Calu3 (cell line): ENCODE measurements at regions of chr3 and their contacts with region 1.

Region 1: DNA sequence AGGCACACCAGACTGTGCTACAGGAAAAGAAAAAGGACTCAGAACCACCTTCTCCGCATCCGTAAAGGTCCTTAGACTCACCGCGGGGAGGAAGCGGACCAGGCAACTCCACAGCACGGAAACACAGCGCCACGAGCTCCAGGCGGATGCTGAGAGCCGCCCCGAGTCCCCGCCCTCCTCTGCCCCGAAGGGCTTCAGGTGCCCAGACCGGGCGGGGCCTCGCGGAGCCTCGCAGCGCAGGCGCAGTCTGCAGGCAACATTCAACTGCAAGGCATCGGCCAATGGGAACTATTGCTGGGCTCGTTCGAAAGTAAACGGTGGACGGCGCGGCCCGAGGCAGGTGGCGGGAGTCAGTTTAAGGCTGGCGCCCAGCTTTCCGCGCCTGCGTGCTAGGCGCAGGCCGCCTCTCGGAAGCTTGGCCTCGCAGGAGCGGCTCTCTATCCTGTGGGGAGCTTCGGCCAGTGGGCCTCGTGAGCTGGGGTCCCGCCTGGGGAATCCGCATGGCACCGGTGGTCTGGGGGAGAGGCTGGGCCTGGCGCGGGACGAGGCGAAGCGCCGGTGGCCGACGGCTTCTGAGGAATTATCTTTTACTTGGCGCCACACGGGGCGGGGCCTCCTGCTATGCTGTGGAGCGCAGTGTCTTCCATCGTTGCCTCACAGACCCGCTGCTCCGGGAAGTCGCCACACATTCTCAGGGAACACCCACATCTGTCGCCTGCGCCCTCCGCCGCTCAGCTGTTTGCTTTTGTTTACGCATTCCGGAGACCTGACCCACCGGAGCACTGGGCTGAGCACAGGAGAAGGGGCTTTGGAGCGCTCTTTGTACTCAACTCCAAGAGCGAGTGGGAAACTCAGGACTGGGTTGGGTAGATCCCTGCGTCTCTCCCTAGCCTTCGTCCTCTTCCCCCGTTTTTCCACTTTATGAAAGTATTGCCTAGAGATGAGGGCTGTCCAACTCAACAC is at the start of gene TRIM59:
- DNase-seq: peak; percentile 97
- H3K4me3 Mint-ChIP-seq: peak within 1 kb of the TSS; percentile 100
- H3K27ac Mint-ChIP-seq: peak within 1 kb of the TSS; percentile 100
- H3K4me1 Mint-ChIP-seq: peaks cover 38% of the 10 kb centered on the region
- H3K27me3 Mint-ChIP-seq: no peaks in the 10 kb centered on the region
- CTCF ChIP-seq: no peak
- total RNA-seq, gene TRIM59: 20.8 and 22.3 TPM in 2 replicates

Region 2: DNA sequence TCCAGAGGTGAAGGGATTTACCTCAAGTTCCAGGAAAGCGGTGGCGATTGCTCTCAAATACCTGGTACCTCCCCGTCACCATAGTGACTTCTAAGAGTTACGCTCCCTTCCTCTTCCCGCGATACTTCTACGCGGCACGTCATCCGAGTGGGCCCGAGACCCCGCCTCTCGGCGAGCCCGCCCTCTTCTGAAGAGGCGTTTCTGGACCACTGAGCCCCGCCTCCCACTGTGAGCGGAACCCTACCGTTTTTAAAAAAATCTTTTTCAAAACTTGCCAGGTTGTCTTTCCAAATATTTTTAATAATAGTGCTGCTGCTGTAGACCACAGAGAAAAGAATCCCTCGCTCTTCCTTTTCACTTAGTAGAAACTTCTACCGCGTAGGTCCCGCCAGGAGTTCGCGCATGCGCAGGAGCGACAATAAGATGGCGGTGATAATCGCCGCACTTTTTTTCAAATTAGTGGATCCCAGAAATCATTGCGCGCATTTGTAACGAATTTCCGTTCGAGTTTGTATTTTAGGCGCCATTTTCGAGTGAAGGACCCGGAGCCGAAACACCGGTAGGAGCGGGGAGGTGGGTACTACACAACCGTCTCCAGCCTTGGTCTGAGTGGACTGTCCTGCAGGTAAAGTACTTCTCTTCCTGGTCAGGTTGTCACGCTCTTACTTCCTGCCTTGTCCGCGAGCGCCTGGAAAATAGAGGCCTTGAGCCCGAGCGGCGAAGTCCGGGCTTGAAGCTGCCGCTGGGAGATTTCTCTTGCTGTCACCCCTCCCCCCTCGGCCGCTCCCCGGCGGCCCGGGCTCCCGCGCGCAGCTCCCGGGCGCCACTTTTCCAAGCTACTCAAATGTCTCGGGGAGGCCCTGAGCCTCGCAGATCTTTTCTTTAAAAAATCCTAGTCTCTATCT is 50.5 kb before region 1 on chr3 and contains the starts of genes IFT80 and SMC4:
- CTCF ChIA-PET with region 1: interaction called, 3 read pairs
- intact Hi-C with region 1: loop called (anchors 5 kb)
- DNase-seq: peak; percentile 99
- H3K4me3 Mint-ChIP-seq: peak within 1 kb of the TSS; percentile 98
- H3K27ac Mint-ChIP-seq: peak within 1 kb of the TSS; percentile 98
- H3K4me1 Mint-ChIP-seq: peaks cover 41% of the 10 kb centered on the region
- H3K27me3 Mint-ChIP-seq: no peaks in the 10 kb centered on the region
- CTCF ChIP-seq: no peak
- total RNA-seq, gene IFT80: 58.0 and 61.8 TPM in 2 replicates
- total RNA-seq, gene SMC4: 231 and 256 TPM in 2 replicates

Region 3: DNA sequence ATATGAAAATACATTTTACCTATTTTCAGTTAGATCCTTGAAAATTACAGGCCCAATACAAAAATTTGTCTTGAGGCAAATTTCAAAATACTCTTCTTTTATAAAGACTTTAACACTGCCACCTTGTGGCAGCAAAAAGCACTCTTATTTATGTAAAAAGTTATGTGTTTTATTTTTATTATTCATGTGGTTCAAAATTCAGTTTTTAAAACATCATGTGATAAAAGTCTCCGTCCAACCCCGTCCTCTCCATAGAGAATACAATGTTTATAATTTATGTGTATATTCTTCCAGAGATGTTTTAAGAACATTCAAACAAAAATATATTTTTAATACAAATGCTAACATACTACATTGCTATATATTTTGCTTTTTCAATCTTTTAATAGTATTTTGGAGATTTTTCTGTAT is 36.5 kb after region 1 on chr3:
- CTCF ChIA-PET with region 1: interaction called, 15 read pairs
- intact Hi-C with region 1: loop called (anchors 2 kb)
- DNase-seq: peak; percentile 19
- H3K4me3 Mint-ChIP-seq: peak overlapping the region; percentile 70
- H3K27ac Mint-ChIP-seq: no peak overlapping the region
- H3K4me1 Mint-ChIP-seq: peaks cover 12% of the 10 kb centered on the region
- H3K27me3 Mint-ChIP-seq: no peaks in the 10 kb centered on the region
- CTCF ChIP-seq: peak; percentile 73